Activated CD4-positive, alpha-beta memory T cell treated with anti-CD3 and anti-CD28 coated beads, Interleukin-2, amount 10 ng/mL, durations not matched to agents 7 days and 5 days (primary cell): ENCODE measurements at regions of chr6 and their contacts with region 1.

Region 1: GRCh38 chr6:99588618-99589289 is 17.9 kb upstream of the PRDM13 start:
- DNase-seq: peak; percentile 75
- H3K4me3 Mint-ChIP-seq: peak overlapping the region; percentile 78
- H3K27ac Mint-ChIP-seq: no peak overlapping the region
- H3K4me1 Mint-ChIP-seq: peaks cover 25% of the 10 kb centered on the region
- H3K27me3 Mint-ChIP-seq: peaks cover 76% of the 10 kb centered on the region

Region 2: DNA sequence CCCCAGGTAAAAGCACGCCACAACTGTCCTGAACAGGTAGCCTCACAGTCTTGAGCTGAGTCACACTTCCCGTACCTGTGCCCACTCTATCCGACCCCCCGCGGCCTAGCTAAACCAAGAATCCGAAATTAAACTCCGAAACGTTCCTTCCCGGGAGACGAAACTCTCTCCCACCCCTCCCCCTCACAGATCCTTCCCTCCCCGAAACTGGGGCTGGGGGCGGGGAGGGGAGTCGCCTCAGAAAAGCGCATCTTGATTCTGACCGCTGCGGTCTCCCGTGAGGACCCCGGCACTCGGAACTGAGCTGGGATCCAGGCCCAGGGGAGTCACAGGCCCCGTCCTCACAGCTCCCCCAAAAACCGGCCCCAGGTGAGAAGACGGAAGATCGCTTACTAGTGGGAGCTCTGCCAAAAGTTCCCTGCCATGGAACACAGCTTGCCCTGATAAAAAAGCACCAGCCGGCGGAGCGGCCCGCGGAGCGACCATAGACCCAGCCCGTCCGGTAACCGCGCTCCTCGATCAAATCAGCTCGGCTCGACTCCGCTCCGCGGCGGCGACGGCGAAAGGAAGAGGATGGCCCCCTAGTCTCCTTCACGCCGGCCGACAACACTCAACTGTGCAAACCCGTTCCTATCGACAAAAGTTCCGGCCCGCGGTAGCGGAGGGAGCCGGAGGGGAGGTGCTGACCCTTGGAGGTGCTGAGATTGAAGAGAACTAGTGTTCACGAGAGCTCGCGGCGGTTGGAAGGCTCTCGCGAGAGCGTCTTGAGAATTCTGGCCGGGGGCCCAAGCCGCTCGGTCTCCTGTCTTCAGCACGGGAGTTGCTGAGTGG is 20.4 kb before region 1 on chr6 and contains the start of gene CCNC:
- CTCF ChIA-PET with region 1: interaction called, 15 read pairs
- POLR2A ChIA-PET with region 1: interaction called, 26 read pairs
- DNase-seq: peak; percentile 90
- H3K4me3 Mint-ChIP-seq: peak within 1 kb of the TSS; percentile 98
- H3K27ac Mint-ChIP-seq: peak within 1 kb of the TSS; percentile 89
- H3K4me1 Mint-ChIP-seq: peaks cover 27% of the 10 kb centered on the region
- H3K27me3 Mint-ChIP-seq: no peaks in the 10 kb centered on the region
- total RNA-seq, gene CCNC: 41.5 to 45.4 TPM

Region 3: DNA sequence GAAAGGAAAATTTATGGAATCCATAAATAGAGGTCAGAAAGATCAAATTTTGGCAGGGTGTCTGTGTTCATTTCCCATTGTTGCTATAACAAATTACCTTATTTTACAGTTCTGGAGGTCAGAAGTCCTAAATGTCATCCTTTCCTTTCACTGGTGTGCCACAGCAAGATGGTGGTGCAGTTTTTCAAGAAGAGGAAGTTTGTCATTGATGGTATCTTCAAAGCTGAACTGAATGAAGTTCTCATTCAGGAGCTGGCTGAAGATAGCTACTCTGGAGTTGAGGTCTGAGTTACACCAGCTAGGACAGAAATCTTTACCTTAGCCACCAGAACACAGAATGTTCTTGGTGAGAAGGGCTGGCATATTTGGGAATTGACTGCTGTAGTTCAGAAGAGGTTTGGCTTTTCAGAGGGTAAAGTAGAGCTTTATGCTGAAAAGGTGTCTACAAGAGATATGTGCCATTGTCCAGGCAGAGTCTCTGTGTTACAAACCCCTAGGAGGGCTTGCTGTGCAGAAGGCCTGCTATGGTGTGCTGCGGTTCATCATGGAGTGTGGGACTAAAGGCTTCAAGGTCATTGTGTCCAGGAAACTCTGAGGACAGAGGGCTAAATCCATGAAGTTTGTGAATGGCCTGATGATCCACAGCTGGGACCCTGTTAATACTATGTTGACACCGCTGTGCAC is 13.1 kb before region 1 on chr6:
- CTCF ChIA-PET with region 1: interaction called, 14 read pairs
- POLR2A ChIA-PET with region 1: interaction called, 4 read pairs
- DNase-seq: no peak
- H3K4me3 Mint-ChIP-seq: no peak overlapping the region
- H3K27ac Mint-ChIP-seq: no peak overlapping the region
- H3K4me1 Mint-ChIP-seq: peaks cover 13% of the 10 kb centered on the region
- H3K27me3 Mint-ChIP-seq: peaks cover 33% of the 10 kb centered on the region

Region 4: DNA sequence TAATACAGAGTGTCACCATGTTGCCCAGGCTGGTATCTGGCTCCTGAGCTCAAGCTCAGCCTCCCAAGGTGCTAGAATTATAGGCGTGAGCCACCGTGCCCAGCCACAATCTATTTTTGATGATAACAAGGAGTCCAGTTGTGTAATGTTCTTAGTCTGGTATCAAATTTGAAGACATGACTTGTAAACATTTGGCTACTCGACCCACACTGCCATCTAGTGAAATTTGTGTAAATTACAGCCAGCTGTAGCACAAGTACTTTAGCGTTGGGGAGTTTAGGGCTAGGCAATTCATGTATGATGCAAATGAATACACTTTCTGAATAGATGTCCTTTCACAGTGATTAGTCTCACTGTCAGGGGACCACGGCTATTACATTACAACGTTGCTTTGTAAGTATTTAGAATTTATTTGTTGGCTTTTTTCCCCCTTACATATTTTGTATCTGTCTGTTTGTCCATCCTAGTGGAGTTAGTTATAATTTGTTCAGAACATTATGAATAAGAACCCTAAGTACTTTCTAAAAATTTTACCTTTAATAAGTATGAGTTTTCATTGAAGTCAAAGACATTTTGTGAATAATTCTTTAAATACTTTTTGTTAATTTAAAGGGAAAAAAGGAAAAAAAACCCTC is 157.6 kb after region 1 on chr6:
- CTCF ChIA-PET with region 1: interaction called, 21 read pairs
- POLR2A ChIA-PET with region 1: no interaction called
- DNase-seq: peak; percentile 53
- H3K4me3 Mint-ChIP-seq: no peak overlapping the region
- H3K27ac Mint-ChIP-seq: no peak overlapping the region
- H3K4me1 Mint-ChIP-seq: no peaks in the 10 kb centered on the region
- H3K27me3 Mint-ChIP-seq: peaks cover 26% of the 10 kb centered on the region